MCF 10A (cell line): ENCODE measurements at regions of chr1 and their contacts with region 1.

Region 1: DNA sequence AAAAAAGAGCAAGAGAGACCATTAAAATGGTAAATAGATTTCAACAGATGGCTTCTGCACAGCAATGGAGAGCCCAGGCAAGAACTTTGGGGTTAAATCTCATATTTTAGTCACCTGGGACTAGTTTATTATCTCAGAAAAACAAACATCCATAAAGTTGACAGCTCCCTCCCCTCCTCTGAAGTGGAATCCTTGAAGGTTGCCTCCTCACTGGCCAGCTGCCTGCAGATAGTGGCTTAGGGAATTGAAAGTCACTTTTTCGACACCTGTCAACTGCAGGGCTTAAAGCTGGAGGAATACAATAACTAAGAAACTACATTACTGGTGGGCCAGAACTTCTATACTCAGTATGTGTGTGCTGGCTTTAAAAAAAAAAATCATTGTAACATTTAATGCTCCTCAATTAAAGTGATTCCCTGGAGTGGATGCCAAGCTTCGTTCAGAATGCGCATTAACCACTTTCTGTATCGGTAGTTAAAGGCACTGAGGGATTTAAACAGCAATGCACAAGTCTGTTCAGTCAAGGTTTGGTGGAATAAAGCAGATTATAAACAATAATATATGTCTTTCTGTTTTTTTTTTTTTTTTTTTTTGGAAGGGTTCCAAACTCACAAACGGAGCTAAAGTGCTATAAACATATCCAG is 52.5 kb downstream of the LHX4 start:
- DNase-seq: no peak
- H3K4me3 Mint-ChIP-seq: no peak overlapping the region
- H3K27ac Mint-ChIP-seq: no peak overlapping the region
- H3K4me1 Mint-ChIP-seq: no peaks in the 10 kb centered on the region
- H3K27me3 Mint-ChIP-seq: no peaks in the 10 kb centered on the region
- CTCF ChIP-seq: no peak

Region 2: GRCh38 chr1:180269761-180270527 is 12.6 kb before region 1 on chr1:
- CTCF ChIA-PET with region 1: interaction called, 16 read pairs
- POLR2A ChIA-PET with region 1: interaction called, 8 read pairs
- intact Hi-C with region 1: no loop called
- DNase-seq: peak; percentile 62
- H3K4me3 Mint-ChIP-seq: no peak overlapping the region
- H3K27ac Mint-ChIP-seq: no peak overlapping the region
- H3K4me1 Mint-ChIP-seq: no peaks in the 10 kb centered on the region
- H3K27me3 Mint-ChIP-seq: no peaks in the 10 kb centered on the region
- CTCF ChIP-seq: peak; percentile 48